ENCODE measurements at regions of chr3 and their contacts with region 1.

Region 1: DNA sequence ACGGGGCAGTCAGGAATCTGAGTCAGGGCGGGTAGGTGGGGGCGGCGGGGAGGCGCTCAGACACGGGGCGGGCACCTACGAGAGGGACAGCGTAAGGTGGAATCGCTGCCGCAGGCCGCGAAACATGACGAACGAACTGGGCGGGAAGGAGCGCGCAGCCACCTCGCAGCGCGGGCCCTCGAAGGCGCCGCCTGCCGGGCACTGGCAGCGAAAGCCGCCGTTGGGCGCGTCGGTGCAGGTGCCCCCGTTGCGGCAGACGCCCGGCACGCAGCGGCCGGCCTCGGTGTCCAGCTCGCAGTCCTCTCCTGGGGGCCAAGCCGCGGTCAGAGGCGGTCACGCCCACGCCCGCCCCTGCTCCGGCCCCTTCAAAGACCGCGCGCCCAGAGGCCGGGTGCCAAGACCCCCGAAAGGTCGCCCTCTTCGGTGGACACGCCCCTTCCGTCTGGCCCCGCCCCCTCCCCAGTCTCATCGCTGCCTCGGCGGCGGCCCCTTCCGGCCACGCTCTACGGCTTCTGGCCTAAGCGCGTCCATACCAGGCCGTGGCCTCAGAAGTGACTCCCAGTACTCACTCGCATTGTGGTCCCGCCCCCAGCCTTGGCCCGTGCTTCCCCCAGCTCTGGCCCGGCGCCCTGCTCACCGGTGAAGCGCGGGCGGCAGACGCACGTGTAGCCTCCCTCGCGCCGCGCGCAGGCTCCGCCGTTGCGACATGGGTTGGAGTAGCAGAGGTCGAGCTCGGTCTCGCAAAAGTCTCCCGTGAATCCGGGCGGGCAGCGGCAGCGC is 6.4 kb downstream of the CELSR3 start:
- DNase-seq: peak; percentile 83
- ATAC-seq: peak; percentile 85
- H3K4me3 Mint-ChIP-seq: peak overlapping the region; percentile 78
- H3K27ac Mint-ChIP-seq: no peak overlapping the region
- H3K4me1 Mint-ChIP-seq: peaks cover 14% of the 10 kb centered on the region
- H3K27me3 Mint-ChIP-seq: peaks cover 11% of the 10 kb centered on the region
- CTCF ChIP-seq: no peak

Region 2: GRCh38 chr3:48609088-48610005 is 46.9 kb before region 1 on chr3 and contains the start of gene UQCRC1:
- CTCF ChIA-PET with region 1: no interaction called
- POLR2A ChIA-PET with region 1: interaction called, 3 read pairs
- intact Hi-C with region 1: loop called (anchors 1 kb)
- DNase-seq: peak; percentile 89
- ATAC-seq: peak; percentile 99
- H3K4me3 Mint-ChIP-seq: peak within 1 kb of the TSS; percentile 98
- H3K27ac Mint-ChIP-seq: peak within 1 kb of the TSS; percentile 93
- H3K4me1 Mint-ChIP-seq: peaks cover 18% of the 10 kb centered on the region
- H3K27me3 Mint-ChIP-seq: no peaks in the 10 kb centered on the region
- CTCF ChIP-seq: no peak
- total RNA-seq, gene UQCRC1: 117 and 118 TPM in 2 replicates

Region 3: GRCh38 chr3:48708481-48708889 is 52.2 kb after region 1 on chr3:
- CTCF ChIA-PET with region 1: no interaction called
- POLR2A ChIA-PET with region 1: no interaction called
- intact Hi-C with region 1: no loop called
- DNase-seq: no peak
- ATAC-seq: no peak
- H3K4me3 Mint-ChIP-seq: no peak overlapping the region
- H3K27ac Mint-ChIP-seq: no peak overlapping the region
- H3K4me1 Mint-ChIP-seq: peaks cover 37% of the 10 kb centered on the region
- H3K27me3 Mint-ChIP-seq: no peaks in the 10 kb centered on the region
- CTCF ChIP-seq: no peak